PC-9 (cell line): ENCODE measurements at regions of chr3 and their contacts with region 1.

Region 1: DNA sequence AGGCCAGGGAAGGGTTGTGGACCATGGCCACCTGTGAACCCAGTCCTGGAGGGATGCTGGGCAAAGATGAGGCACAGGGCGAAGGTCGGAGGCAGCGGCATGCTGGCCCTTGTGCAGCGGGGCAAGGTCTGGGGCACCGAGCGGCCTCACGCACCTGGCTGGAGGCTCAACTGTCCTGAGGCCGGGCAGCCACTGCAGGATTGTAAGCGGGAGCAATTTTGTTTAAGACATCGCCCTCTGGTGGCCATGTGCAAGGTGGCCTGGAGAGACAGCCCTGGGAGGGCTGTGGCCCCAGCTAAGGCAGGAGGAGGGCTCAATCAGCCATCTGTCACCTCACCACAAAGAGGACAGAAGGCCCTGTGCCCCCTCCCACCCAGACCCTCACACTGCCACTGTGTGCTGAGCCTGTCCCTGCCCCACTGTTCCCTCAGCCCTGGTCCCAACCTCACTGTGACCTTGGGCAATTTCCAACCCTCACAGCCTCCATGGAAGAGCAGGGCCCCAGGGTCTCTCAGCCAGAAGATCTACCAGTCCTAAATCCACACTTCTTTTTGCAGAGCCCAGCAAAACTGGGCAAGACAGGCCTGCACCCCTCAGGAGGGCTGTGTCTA is 46.2 kb downstream of the TPRA1 start:
- DNase-seq: peak; percentile 45 to 80
- H3K4me3 ChIP-seq: no peak overlapping the region
- H3K27ac ChIP-seq: no peak overlapping the region
- H3K4me1 ChIP-seq: peaks cover 4% of the 10 kb centered on the region
- H3K27me3 ChIP-seq: peaks cover 25% of the 10 kb centered on the region
- CTCF ChIP-seq: peak; percentile 85

Region 2: DNA sequence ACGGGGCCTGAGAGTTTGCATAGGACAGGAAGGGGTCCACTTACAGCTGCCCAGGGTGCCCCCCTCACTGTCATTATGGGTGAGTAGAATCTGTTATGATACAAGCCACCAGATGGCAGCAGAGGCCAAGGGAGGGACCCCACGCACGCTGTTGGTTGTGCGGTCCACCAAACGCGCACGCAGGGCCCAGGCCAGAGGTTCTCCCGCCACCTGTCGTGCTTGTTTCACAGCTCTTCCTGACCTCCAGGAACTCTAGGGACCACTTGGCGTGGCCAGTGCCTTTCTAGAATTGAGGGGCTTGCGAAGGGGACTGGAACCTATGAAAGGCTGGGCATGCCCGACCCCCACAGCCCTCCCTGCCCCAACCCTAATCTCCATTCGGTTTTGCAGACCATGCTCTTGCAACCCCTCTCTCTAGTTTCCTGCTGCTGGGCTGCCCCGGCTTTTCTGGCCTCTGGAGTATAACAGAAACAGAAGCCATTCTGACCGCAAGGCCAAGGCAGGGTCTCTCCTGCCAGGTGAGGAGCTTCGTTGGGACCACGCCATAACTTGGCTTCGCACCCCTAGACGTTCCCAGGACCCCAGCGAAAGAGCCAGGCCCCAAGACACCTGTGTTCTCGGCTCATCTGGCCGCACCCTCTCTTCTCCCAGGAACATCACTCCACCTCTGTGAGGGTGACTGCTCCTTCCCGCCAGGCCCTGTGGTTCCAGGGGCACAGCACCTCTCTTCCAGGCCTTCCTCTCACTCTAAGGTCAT is 1409.9 kb before region 1 on chr3:
- CTCF ChIA-PET with region 1: no interaction called
- POLR2A ChIA-PET with region 1: interaction called, 3 read pairs
- intact Hi-C with region 1: loop called (anchors 5 kb)
- DNase-seq: peak in 1 of 2 experiments; percentile 56
- H3K4me3 ChIP-seq: no peak overlapping the region
- H3K27ac ChIP-seq: no peak overlapping the region
- H3K4me1 ChIP-seq: peaks cover 15% of the 10 kb centered on the region
- H3K27me3 ChIP-seq: no peaks in the 10 kb centered on the region
- CTCF ChIP-seq: peak; percentile 85

Region 3: DNA sequence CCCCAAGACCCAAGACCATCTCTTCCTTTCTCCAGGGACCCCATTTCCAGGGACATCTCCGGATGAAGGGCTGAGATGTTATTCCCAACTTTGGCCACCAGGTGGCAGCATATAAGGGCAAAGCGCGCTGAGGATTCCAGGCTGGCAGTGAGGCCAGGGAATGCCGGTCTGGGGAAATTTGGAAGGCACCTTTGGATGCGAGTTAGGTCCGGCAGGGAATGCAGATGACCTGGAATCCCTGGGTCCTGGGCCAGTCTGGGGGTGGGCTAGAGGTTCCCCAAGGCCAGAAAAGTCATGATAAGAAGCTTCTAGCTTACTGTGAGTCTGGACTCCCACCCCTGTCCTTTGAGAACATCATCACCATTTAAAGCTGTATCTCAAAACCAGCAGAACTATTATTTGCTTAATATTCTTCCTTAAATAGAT is 1021.9 kb before region 1 on chr3:
- CTCF ChIA-PET with region 1: interaction called, 3 read pairs
- POLR2A ChIA-PET with region 1: no interaction called
- intact Hi-C with region 1: loop called (anchors 2 kb)
- DNase-seq: peak in 1 of 2 experiments; percentile 55
- H3K4me3 ChIP-seq: no peak overlapping the region
- H3K27ac ChIP-seq: no peak overlapping the region
- H3K4me1 ChIP-seq: no peaks in the 10 kb centered on the region
- H3K27me3 ChIP-seq: peaks cover 28% of the 10 kb centered on the region; the same call in 1 of the 2 replicates
- CTCF ChIP-seq: peak; percentile 93

Region 4: DNA sequence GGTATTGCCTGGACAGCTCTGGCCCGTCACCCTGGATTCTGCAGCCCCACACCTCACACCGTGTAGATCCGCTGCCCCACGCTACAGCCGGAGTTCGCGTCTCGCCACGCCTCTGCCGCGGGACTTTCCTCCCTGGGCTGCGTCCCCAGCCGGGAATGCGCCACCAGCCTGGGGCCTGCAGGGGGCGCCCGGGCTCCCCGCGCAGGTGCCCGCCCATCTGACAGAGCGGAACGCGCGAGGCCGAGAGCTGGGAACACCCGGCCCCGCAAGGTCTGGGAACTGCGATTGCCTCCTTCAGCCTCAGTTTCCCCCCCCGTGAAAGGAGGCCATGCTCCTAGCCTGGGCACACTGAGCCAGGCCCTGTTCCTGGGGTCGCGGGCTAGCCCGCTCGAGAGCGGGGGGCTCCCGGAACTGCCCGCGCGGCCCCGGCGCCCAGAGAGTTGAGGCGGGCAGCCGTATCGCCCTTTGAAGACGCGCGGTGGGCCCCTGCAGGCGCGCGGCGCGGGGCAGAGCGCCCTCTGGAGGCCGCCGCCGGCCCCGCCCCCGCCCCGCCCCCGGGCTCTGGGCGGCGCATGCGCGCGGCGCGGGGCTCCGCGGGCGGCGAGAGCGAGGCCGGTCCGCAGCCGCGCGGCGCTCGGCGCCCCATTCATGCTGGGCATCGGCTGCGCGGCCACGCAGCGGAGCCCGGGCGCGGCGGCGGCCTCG is 561.7 kb before region 1 on chr3 and contains the start of gene PLXNA1:
- CTCF ChIA-PET with region 1: interaction called, 9 read pairs
- POLR2A ChIA-PET with region 1: interaction called, 7 read pairs
- intact Hi-C with region 1: loop called (anchors 2 kb)
- DNase-seq: peak in 1 of 2 experiments; percentile 82
- H3K4me3 ChIP-seq: peak within 1 kb of the TSS; percentile 86
- H3K27ac ChIP-seq: no peak within 1 kb of the TSS
- H3K4me1 ChIP-seq: peaks cover 20% of the 10 kb centered on the region
- H3K27me3 ChIP-seq: no peaks in the 10 kb centered on the region
- CTCF ChIP-seq: peak; percentile 93
- total RNA-seq, gene PLXNA1: 83.1 and 88.2 TPM in 2 replicates

Region 5: DNA sequence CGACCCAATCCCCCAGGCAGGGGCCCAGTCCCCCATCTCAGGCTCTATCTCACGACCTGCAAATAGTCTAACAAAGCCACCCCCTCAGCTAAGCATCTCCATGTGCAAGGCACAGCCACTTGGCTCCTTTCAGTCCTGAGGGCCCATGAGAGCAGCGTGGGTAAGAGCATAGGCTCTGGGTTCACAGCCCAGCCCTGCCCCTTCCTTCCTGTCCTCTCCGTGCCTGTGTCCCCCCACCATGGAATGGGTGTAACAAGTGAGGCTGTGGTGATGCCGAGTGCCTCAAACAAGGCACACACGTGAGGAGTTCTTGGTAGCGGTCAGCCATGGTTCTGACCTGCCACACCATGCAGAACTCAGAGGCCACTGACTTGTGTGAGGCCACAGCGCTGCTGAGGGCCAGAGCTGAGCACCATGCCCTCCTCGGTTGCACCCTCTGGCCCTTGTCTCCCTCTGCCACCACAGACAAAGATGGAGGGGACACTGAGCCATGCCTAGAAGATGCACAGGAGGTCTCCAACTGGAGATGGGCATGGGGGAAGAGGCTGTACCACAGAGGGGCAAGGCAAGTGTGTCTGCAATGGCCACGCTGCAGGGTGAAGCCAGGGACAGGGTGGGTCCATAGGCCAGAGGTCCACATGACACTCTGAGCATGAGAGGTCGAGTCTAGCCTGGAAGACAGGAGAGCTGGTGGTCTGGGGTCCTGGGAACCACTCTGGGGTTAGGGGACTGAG is 36.2 kb after region 1 on chr3:
- CTCF ChIA-PET with region 1: interaction called, 14 read pairs
- POLR2A ChIA-PET with region 1: no interaction called
- intact Hi-C with region 1: no loop called
- DNase-seq: no peak
- H3K4me3 ChIP-seq: no peak overlapping the region
- H3K27ac ChIP-seq: no peak overlapping the region
- H3K4me1 ChIP-seq: no peaks in the 10 kb centered on the region
- H3K27me3 ChIP-seq: no peaks in the 10 kb centered on the region
- CTCF ChIP-seq: no peak